ENCODE measurements at regions of chr10 and their contacts with region 1.

Region 1: GRCh38 chr10:97210543-97210961 is 24.8 kb upstream of the SLIT1 start:
- DNase-seq: peak; percentile 84
- ATAC-seq: peak; percentile 78
- H3K4me3 Mint-ChIP-seq: no peak overlapping the region
- H3K27ac Mint-ChIP-seq: no peak overlapping the region
- H3K4me1 Mint-ChIP-seq: no peaks in the 10 kb centered on the region
- H3K27me3 Mint-ChIP-seq: no peaks in the 10 kb centered on the region
- CTCF ChIP-seq: peak; percentile 99

Region 2: GRCh38 chr10:97065128-97065527 is 145.4 kb before region 1 on chr10:
- CTCF ChIA-PET with region 1: interaction called, 407 read pairs
- POLR2A ChIA-PET with region 1: no interaction called
- intact Hi-C with region 1: no loop called
- DNase-seq: no peak
- ATAC-seq: no peak
- H3K4me3 Mint-ChIP-seq: no peak overlapping the region
- H3K27ac Mint-ChIP-seq: no peak overlapping the region
- H3K4me1 Mint-ChIP-seq: peaks cover 10% of the 10 kb centered on the region
- H3K27me3 Mint-ChIP-seq: peaks cover 3% of the 10 kb centered on the region
- CTCF ChIP-seq: no peak

Region 3: DNA sequence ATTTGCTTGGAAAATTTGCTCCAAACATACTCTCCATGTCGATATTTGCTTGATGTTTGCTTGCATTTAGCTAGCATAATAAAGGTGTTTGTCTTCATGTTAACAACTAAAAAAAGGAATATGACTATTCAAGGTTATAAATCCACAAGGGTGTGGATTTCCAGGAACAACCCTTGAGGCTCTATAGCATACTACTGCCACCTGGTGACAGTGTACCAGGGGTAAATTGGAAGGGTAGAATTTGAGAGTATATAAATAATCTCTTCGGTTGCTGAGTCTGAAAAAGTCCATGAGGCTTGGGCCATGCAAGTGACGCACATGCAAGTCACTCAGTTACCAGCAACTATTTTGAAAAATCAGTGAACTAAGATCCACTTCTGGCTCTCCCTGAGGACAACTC is 93.2 kb before region 1 on chr10:
- CTCF ChIA-PET with region 1: interaction called, 15 read pairs
- POLR2A ChIA-PET with region 1: no interaction called
- intact Hi-C with region 1: no loop called
- DNase-seq: peak; percentile 19
- ATAC-seq: no peak
- H3K4me3 Mint-ChIP-seq: no peak overlapping the region
- H3K27ac Mint-ChIP-seq: no peak overlapping the region
- H3K4me1 Mint-ChIP-seq: no peaks in the 10 kb centered on the region
- H3K27me3 Mint-ChIP-seq: peaks cover 3% of the 10 kb centered on the region
- CTCF ChIP-seq: peak; percentile 51

Region 4: DNA sequence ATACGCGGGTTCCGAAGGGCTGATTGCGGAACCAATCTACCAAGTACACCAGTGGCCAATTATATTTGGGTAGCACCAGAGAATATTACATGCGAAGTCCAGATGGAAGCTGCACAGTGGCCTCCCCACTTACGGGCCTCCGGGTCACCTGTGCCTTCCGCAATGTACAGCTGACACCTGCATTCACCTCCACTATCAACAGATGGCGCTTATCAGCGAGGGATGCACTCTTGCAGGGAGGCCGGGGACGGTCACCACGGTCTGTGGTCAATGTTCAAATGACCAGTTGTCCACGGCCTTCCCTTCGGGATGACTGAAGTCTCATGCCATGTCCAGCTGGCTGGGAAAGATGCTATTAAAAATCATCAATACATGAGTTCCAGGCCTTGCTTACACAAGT is 72.4 kb before region 1 on chr10:
- CTCF ChIA-PET with region 1: interaction called, 15 read pairs
- POLR2A ChIA-PET with region 1: no interaction called
- intact Hi-C with region 1: no loop called
- DNase-seq: no peak
- ATAC-seq: no peak
- H3K4me3 Mint-ChIP-seq: no peak overlapping the region
- H3K27ac Mint-ChIP-seq: no peak overlapping the region
- H3K4me1 Mint-ChIP-seq: peaks cover 5% of the 10 kb centered on the region
- H3K27me3 Mint-ChIP-seq: peaks cover 17% of the 10 kb centered on the region
- CTCF ChIP-seq: peak; percentile 27

Region 5: GRCh38 chr10:97196223-97197029 is 14.1 kb before region 1 on chr10:
- CTCF ChIA-PET with region 1: interaction called, 166 read pairs
- POLR2A ChIA-PET with region 1: interaction called, 4 read pairs
- intact Hi-C with region 1: no loop called
- DNase-seq: peak; percentile 81
- ATAC-seq: peak; percentile 91
- H3K4me3 Mint-ChIP-seq: peak overlapping the region; percentile 70
- H3K27ac Mint-ChIP-seq: no peak overlapping the region
- H3K4me1 Mint-ChIP-seq: peaks cover 13% of the 10 kb centered on the region
- H3K27me3 Mint-ChIP-seq: peaks cover 24% of the 10 kb centered on the region
- CTCF ChIP-seq: peak; percentile 84

Region 6: DNA sequence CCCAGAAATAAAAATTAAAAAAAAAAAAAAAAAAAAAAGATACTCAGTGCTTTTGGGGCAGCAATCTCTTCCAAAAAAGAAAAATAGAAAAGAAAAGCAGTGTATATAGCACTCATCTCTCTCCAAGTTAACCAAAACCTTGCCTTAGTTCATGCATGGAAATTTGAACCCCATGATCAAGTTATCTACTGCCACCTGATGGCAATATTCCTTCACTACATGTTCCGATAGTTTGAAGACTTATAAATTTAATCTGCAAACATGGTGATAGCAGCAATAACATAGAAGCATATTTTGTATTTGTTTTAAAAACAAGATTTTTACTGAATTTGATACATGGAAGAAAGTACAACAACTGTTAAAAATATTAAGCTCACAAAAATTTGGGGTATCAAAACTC is 23.8 kb after region 1 on chr10:
- CTCF ChIA-PET with region 1: interaction called, 64 read pairs
- POLR2A ChIA-PET with region 1: no interaction called
- intact Hi-C with region 1: no loop called
- DNase-seq: no peak
- ATAC-seq: peak; percentile 53
- H3K4me3 Mint-ChIP-seq: no peak overlapping the region
- H3K27ac Mint-ChIP-seq: no peak overlapping the region
- H3K4me1 Mint-ChIP-seq: peaks cover 7% of the 10 kb centered on the region
- H3K27me3 Mint-ChIP-seq: no peaks in the 10 kb centered on the region
- CTCF ChIP-seq: peak; percentile 74

Region 7: DNA sequence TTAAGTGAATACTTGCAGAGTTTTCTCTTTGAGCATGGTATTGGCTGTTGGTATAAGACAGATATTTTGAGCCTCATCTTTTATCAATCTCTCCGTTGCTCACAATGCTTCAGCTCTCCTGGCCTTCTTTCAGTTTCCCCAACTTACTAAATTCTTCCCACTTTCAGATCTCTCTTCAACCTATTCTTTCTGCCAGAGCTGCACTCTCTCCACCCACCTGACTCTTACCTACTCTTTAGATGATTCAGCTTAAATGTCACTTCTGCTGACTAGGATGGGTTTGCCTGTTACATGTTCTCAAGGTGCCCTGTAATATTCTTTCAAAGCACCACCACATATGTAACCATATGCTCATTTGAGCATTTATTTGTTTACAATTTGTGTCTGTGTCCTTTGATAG is 233.7 kb after region 1 on chr10:
- CTCF ChIA-PET with region 1: no interaction called
- POLR2A ChIA-PET with region 1: no interaction called
- intact Hi-C with region 1: no loop called
- DNase-seq: no peak
- ATAC-seq: no peak
- H3K4me3 Mint-ChIP-seq: peak overlapping the region; percentile 97
- H3K27ac Mint-ChIP-seq: peak overlapping the region; percentile 58
- H3K4me1 Mint-ChIP-seq: peaks cover 36% of the 10 kb centered on the region
- H3K27me3 Mint-ChIP-seq: no peaks in the 10 kb centered on the region
- CTCF ChIP-seq: no peak

Measured in activated CD8-positive, alpha-beta T cell treated with anti-CD3 and anti-CD28 coated beads for 36 hours (primary cell).